GM12878 (cell line): ENCODE measurements at regions of chr17 and their contacts with region 1.

Region 1: GRCh38 chr17:66567234-66568170 is 265.1 kb downstream of the PRKCA start:
- DNase-seq: peak; percentile 23
- ATAC-seq: peak; percentile 98
- H3K4me3 ChIP-seq: no peak overlapping the region
- H3K27ac ChIP-seq: no peak overlapping the region
- H3K4me1 ChIP-seq: no peaks in the 10 kb centered on the region
- H3K27me3 ChIP-seq: no peaks in the 10 kb centered on the region
- CTCF ChIP-seq: peak; percentile 87
- EP300 ChIP-seq: no peak
- POLR2A ChIP-seq: no peak
- RAD21 ChIP-seq: peak; percentile 93

Region 2: GRCh38 chr17:66255112-66255511 is 312.4 kb before region 1 on chr17:
- CTCF ChIA-PET with region 1: interaction called, 87 read pairs
- POLR2A ChIA-PET with region 1: no interaction called
- RAD21 ChIA-PET with region 1: interaction called, 29 read pairs
- SMC1A ChIA-PET with region 1: interaction called, 65 read pairs
- in situ Hi-C with region 1: loop called (anchors 5 kb)
- intact Hi-C with region 1: loop called (anchors 1 kb)
- DNase-seq: no peak
- ATAC-seq: peak; percentile 96
- H3K4me3 ChIP-seq: no peak overlapping the region
- H3K27ac ChIP-seq: no peak overlapping the region
- H3K4me1 ChIP-seq: no peaks in the 10 kb centered on the region
- H3K27me3 ChIP-seq: no peaks in the 10 kb centered on the region
- CTCF ChIP-seq: peak; percentile 39 to 81 (median 42); a peak in 4 of 6 replicates
- EP300 ChIP-seq: no peak
- POLR2A ChIP-seq: no peak
- RAD21 ChIP-seq: peak; percentile 83

Region 3: DNA sequence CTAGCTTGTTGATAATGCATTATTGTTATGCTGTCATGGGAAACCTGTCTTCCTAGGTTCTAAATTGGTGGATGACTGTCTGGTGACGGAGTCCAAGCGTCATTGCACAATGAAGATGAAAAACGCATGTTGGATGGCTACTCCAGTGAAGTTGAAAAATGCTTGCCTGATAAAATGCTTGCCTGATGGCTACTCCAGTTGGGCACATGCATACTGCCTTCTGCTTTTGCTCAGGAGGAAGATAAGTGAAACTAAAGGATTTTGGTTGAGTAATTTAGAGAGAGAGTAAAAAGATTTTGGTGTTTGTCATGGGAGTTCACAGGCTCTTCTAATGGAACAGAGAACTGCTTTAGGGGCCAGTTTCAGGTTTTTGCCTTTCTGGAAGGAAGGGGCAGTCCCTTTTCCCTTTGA is 146.5 kb before region 1 on chr17:
- CTCF ChIA-PET with region 1: interaction called, 4 read pairs
- POLR2A ChIA-PET with region 1: no interaction called
- RAD21 ChIA-PET with region 1: interaction called, 3 read pairs
- SMC1A ChIA-PET with region 1: interaction called, 4 read pairs
- in situ Hi-C with region 1: no loop called
- intact Hi-C with region 1: loop called (anchors 5 kb)
- DNase-seq: no peak
- ATAC-seq: peak; percentile 76
- H3K4me3 ChIP-seq: no peak overlapping the region
- H3K27ac ChIP-seq: no peak overlapping the region
- H3K4me1 ChIP-seq: no peaks in the 10 kb centered on the region
- H3K27me3 ChIP-seq: no peaks in the 10 kb centered on the region
- CTCF ChIP-seq: no peak
- EP300 ChIP-seq: no peak; a peak in 1 of 4 replicates
- POLR2A ChIP-seq: no peak
- RAD21 ChIP-seq: no peak

Region 4: GRCh38 chr17:66580184-66580955 is 12.9 kb after region 1 on chr17:
- CTCF ChIA-PET with region 1: interaction called, 16 read pairs
- POLR2A ChIA-PET with region 1: no interaction called
- RAD21 ChIA-PET with region 1: interaction called, 3 read pairs
- SMC1A ChIA-PET with region 1: interaction called, 3 read pairs
- in situ Hi-C with region 1: no loop called
- intact Hi-C with region 1: no loop called
- DNase-seq: no peak
- ATAC-seq: no peak
- H3K4me3 ChIP-seq: no peak overlapping the region
- H3K27ac ChIP-seq: no peak overlapping the region
- H3K4me1 ChIP-seq: no peaks in the 10 kb centered on the region
- H3K27me3 ChIP-seq: no peaks in the 10 kb centered on the region
- CTCF ChIP-seq: no peak
- EP300 ChIP-seq: no peak
- POLR2A ChIP-seq: no peak
- RAD21 ChIP-seq: no peak

Region 5: DNA sequence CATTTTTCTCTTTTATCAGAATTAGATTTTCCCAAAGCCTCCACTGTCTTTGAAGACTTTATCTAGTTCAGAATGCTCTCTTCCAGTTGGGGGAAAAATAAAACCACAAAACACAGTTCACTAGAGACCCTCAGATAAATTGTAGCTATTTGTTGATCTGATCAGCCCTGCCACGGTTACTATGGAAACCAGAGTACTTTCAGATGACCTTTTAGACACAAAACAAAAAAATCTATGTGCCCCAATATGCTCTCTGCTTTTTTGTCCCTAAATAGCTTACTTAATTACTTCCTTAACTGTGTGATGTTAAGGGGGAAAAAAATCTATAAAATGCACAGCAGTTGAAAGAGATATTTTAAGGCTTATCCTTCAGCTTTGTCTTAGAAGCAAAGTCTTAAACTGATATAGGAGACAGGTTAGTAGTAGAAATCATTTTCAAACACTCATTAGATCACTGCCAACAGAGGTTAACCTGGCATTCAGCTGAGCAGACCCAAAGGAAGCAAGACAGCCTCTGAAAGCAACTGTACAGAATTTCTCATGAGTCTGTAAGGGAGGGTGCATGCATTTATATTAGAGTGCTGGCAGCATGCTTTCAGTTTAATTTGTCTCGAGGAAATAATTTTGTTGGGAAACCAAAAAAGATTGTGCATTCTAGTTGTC is 137.5 kb after region 1 on chr17:
- CTCF ChIA-PET with region 1: interaction called, 4 read pairs
- POLR2A ChIA-PET with region 1: no interaction called
- RAD21 ChIA-PET with region 1: interaction called, 5 read pairs
- SMC1A ChIA-PET with region 1: interaction called, 7 read pairs
- in situ Hi-C with region 1: no loop called
- intact Hi-C with region 1: loop called (anchors 5 kb)
- DNase-seq: no peak
- ATAC-seq: peak; percentile 43
- H3K4me3 ChIP-seq: no peak overlapping the region
- H3K27ac ChIP-seq: no peak overlapping the region
- H3K4me1 ChIP-seq: peaks cover 20% of the 10 kb centered on the region
- H3K27me3 ChIP-seq: no peaks in the 10 kb centered on the region
- CTCF ChIP-seq: no peak
- EP300 ChIP-seq: peak in 1 of 2 experiments; percentile 23; a peak in 1 of 4 replicates
- POLR2A ChIP-seq: no peak
- RAD21 ChIP-seq: no peak